Activated CD8-positive, alpha-beta T cell treated with anti-CD3 and anti-CD28 coated beads for 36 hours (primary cell): ENCODE measurements at regions of chr1 and their contacts with region 1.

Region 1: DNA sequence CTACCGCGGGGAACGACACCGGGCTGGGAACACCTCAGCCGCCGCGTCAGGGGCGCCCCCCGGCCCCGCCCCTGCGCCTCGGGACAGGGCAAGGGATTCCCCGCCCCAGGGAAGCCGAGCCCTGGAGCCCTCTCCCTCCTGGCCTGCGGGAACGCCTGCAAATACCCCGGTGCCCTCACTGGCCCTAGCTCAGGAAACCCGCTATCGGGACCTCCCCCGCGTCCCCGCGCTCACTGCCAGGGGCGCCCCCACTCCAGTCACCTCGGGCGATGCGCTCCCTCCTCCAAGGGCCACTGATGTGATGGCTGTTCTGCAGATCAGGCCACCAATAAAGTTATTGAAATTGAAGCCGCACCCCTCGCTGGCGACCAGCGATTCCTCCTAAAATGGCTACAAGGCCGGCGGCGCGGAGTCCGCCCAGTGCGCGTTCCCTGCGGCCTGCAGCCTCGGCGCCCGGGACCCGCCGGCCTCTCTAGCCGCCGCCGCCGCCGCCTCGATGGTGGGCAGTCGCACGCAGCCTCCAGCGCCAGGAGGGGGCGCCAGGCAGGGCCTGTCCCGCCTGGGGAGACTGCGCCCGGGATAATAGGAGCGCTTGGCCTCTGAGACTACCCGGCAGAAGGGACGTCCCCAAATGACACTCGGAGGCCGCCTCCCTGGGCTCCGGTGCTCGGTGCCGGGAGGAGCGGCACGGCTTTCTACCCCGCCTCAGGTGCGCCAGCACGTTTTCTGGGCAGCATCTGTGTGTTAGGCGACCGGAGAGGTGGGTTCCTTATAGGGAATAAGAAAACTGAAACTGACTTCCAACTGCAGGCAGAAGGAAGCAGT is at the start of gene PRKAB2:
- DNase-seq: peak; percentile 94
- ATAC-seq: peak; percentile 89
- H3K4me3 Mint-ChIP-seq: peak within 1 kb of the TSS; percentile 98
- H3K27ac Mint-ChIP-seq: peak within 1 kb of the TSS; percentile 99
- H3K4me1 Mint-ChIP-seq: peaks cover 38% of the 10 kb centered on the region
- H3K27me3 Mint-ChIP-seq: no peaks in the 10 kb centered on the region
- CTCF ChIP-seq: peak; percentile 73
- total RNA-seq, gene PRKAB2: 5.8 to 6.4 TPM

Region 2: DNA sequence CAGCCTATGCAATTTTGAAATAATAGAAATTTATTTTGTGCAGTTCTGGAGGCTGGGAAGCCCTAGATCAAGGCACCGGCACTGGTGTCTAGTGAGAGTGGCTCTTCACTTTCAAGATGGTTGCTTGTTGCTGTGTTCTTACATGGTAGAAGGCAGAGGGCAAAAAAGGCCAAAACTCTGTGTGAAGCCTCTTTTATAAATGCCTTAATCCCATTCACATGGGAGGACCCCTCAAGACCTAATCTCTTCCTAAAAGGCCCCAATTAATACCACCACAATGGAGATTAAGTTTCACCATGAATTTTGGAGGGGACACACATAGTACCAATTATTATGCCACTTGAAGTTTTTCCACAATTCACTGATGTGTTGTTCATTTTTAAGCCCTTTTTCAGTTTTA is 21.1 kb before region 1 on chr1:
- CTCF ChIA-PET with region 1: no interaction called
- POLR2A ChIA-PET with region 1: no interaction called
- intact Hi-C with region 1: no loop called
- DNase-seq: no peak
- ATAC-seq: no peak
- H3K4me3 Mint-ChIP-seq: no peak overlapping the region
- H3K27ac Mint-ChIP-seq: no peak overlapping the region
- H3K4me1 Mint-ChIP-seq: no peaks in the 10 kb centered on the region
- H3K27me3 Mint-ChIP-seq: no peaks in the 10 kb centered on the region
- CTCF ChIP-seq: no peak

Region 3: DNA sequence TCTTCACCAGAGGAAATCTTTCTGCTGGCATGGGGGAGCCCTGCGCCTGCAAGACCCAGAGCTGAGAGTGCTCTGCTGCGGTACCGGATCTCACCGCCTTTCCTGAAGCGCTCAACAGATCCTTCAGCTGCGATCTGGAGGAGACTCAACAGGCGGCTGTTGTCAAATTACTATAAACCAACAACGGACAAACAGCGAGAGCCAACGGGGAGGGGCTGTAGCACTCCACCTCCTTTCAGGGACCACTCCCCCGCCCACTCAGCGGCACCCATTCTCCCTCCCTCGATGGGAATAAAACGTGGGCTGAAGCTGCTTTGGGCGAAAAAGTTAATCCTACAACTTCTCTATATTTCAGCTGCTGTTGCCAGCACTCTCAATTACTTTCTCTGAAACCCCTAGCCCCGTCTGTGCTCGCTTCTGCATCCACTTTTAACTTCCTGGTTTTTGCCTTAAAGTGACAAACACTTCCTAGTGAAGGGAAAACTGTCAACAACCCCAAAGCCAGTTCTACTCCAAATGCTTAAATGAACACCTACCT is 52.9 kb after region 1 on chr1 and contains the start of gene FMO5:
- CTCF ChIA-PET with region 1: interaction called, 6 read pairs
- POLR2A ChIA-PET with region 1: no interaction called
- intact Hi-C with region 1: loop called (anchors 5 kb)
- DNase-seq: peak; percentile 67
- ATAC-seq: peak; percentile 97
- H3K4me3 Mint-ChIP-seq: peak within 1 kb of the TSS; percentile 93
- H3K27ac Mint-ChIP-seq: peak within 1 kb of the TSS; percentile 86
- H3K4me1 Mint-ChIP-seq: peaks cover 14% of the 10 kb centered on the region
- H3K27me3 Mint-ChIP-seq: no peaks in the 10 kb centered on the region
- CTCF ChIP-seq: peak; percentile 38
- total RNA-seq, gene FMO5: 0.16 TPM in 1 of 2 experiments, not detected in the other